Posterior cingulate gyrus (tissue), 11 donors: ENCODE measurements at regions of chr10 and their contacts with region 1.

Region 1: GRCh38 chr10:624605-625332 is 64.7 kb downstream of the DIP2C start:
- DNase-seq: peak; percentile 84 to 98 (median 90)

Region 2: GRCh38 chr10:329361-330099 is 295.2 kb before region 1 on chr10:
- intact Hi-C with region 1: no loop called
- DNase-seq: peak; percentile 53 to 94 (median 72)

Region 3: GRCh38 chr10:659688-660141 is 34.9 kb after region 1 on chr10:
- intact Hi-C with region 1: loop called (anchors 5 kb)
- DNase-seq: peak in 1 of 10 donors; percentile 12

Region 4: GRCh38 chr10:1516492-1517165 is 891.9 kb after region 1 on chr10:
- intact Hi-C with region 1: no loop called
- DNase-seq: peak in 1 of 10 donors; percentile 61